Left cardiac atrium (tissue), 4 donors: ENCODE measurements at regions of chr11 and their contacts with region 1.

Region 1: DNA sequence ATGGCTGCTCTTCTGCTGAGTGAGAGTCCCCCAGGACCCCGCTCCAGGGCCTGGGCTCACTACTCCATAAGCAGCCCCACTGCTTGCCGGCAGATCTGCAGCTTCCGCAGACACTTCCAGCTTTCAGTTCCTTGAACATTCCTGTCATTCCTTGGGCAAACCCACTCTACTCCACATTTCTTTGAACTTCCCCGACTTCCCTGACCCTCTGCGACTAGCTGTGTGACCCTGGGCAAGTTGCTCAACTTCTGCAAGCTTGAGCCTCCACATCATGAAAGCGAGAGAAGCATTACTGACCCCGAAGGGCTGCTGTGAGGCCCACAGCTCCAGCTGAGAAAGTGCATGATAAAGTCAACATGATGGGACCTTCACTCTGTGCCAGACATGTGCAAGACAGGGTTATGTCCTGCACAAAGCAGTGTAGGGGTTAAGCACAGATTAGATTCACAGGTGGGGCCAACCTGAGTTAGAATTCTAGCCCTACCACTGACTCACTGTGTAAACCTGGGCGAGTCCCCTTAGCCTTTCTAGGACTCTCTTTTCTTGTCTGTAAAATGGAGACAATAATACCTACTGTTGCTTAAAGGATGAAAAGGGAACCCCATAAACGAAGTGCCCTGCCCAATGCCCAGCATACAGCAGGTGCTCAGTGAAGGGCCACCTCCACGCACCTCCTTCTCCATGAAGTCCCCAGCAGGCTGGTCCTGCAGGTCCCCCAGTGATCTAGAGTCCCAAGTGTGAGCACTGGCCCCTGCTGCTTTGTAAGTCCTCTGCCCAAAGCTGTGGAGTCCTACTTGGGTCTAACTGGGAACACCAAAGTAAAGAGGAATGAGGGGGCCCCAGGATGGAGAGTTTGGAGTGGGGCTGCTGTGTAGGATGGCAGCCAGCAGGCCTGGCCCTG is 51.6 kb downstream of the THAP12 start:
- DNase-seq: no peak
- ATAC-seq: no peak

Region 2: DNA sequence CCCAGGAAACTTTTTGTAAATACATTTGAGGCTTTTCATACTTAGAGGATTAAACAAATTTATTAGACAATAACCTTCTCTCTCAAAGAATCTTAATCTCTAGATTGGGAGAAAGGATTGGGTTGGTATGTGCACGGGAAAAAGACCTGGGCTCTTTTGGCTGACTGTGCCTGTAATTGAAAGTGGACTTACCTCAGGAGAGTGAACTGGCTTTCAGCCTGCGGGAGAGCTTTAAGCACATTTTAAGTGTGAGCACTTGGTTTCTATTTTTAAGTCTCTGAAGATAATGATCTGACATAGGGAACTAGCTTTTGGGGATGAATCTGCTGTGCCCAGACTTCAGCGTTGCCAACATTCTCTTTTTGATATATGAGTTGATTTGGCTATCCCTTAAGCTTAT is 478.5 kb before region 1 on chr11:
- intact Hi-C with region 1: no loop called
- DNase-seq: no peak
- ATAC-seq: peak; percentile 43 to 72

Region 3: DNA sequence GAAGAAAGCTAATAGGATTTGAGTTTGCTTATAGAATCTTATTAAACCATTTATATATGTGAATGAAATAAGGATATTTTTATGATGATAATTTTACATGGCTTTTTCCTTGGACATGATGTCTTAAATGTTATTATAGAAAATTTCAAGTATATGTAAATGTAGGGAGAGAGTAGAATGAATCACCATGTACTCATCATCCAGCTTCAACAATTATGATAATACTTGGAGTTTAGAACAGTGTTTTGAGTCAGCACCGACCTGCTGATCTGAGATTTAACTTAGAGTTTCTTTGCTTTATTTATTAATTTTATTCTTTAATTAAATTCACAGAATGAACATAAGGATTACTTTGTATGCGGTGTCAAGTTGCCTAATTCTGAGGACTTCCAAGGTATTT is 320.9 kb before region 1 on chr11:
- intact Hi-C with region 1: no loop called
- DNase-seq: no peak
- ATAC-seq: no peak

Region 4: GRCh38 chr11:76235233-76236091 is 93.9 kb before region 1 on chr11:
- intact Hi-C with region 1: loop called in 1 of 2 experiments (anchors 10 kb)
- DNase-seq: peak; percentile 91
- ATAC-seq: peak; percentile 90 to 91

Region 5: GRCh38 chr11:76371170-76371569 is 41.8 kb after region 1 on chr11:
- intact Hi-C with region 1: no loop called
- DNase-seq: no peak
- ATAC-seq: peak in 1 of 2 donors; percentile 56

Region 6: GRCh38 chr11:76654298-76654851 is 325.0 kb after region 1 on chr11:
- intact Hi-C with region 1: no loop called
- DNase-seq: peak; percentile 81
- ATAC-seq: peak; percentile 62 to 71